GM12878 (cell line): ENCODE measurements at regions of chr14 and their contacts with region 1.

Region 1: GRCh38 chr14:75709207-75709812 is 48.3 kb downstream of the TTLL5 start:
- DNase-seq: peak; percentile 24
- ATAC-seq: peak; percentile 84
- H3K4me3 ChIP-seq: no peak overlapping the region
- H3K27ac ChIP-seq: no peak overlapping the region
- H3K4me1 ChIP-seq: peaks cover 6% of the 10 kb centered on the region
- H3K27me3 ChIP-seq: no peaks in the 10 kb centered on the region
- CTCF ChIP-seq: peak; percentile 75 to 81 (median 81)
- EP300 ChIP-seq: no peak
- POLR2A ChIP-seq: no peak
- RAD21 ChIP-seq: peak; percentile 82

Region 2: GRCh38 chr14:75604856-75605851 is 104.2 kb before region 1 on chr14:
- CTCF ChIA-PET with region 1: no interaction called
- POLR2A ChIA-PET with region 1: no interaction called
- RAD21 ChIA-PET with region 1: no interaction called
- SMC1A ChIA-PET with region 1: no interaction called
- in situ Hi-C with region 1: no loop called
- intact Hi-C with region 1: no loop called
- DNase-seq: no peak
- ATAC-seq: no peak
- H3K4me3 ChIP-seq: no peak overlapping the region
- H3K27ac ChIP-seq: no peak overlapping the region
- H3K4me1 ChIP-seq: no peaks in the 10 kb centered on the region
- H3K27me3 ChIP-seq: no peaks in the 10 kb centered on the region
- CTCF ChIP-seq: no peak
- EP300 ChIP-seq: no peak
- POLR2A ChIP-seq: no peak
- RAD21 ChIP-seq: no peak

Region 3: DNA sequence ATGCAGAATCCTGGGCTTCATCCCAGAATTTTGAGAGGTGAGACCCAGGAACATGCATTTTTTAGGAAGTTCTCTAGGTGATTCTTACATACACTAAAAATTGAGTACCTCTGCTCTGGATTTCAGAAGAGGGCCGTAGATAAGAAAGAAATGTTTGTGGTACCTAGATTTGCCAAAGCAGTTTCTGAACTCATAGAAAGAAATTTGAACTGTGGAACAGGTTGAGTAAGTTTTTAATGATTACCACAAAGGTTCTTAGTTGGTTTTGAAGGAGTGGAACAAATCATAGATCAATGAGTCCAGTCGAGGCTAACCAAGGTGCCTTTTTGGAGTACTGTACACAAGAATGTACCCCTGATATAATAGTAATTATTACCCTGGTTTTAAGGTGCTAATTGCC is 23.4 kb before region 1 on chr14:
- CTCF ChIA-PET with region 1: interaction called, 14 read pairs
- POLR2A ChIA-PET with region 1: no interaction called
- RAD21 ChIA-PET with region 1: interaction called, 3 read pairs
- SMC1A ChIA-PET with region 1: no interaction called
- in situ Hi-C with region 1: no loop called
- intact Hi-C with region 1: no loop called
- DNase-seq: no peak
- ATAC-seq: no peak
- H3K4me3 ChIP-seq: no peak overlapping the region
- H3K27ac ChIP-seq: no peak overlapping the region
- H3K4me1 ChIP-seq: no peaks in the 10 kb centered on the region
- H3K27me3 ChIP-seq: no peaks in the 10 kb centered on the region
- CTCF ChIP-seq: no peak
- EP300 ChIP-seq: no peak
- POLR2A ChIP-seq: no peak
- RAD21 ChIP-seq: no peak

Region 4: GRCh38 chr14:75748336-75748735 is 39.0 kb after region 1 on chr14:
- CTCF ChIA-PET with region 1: interaction called, 23 read pairs
- POLR2A ChIA-PET with region 1: no interaction called
- RAD21 ChIA-PET with region 1: no interaction called
- SMC1A ChIA-PET with region 1: interaction called, 4 read pairs
- in situ Hi-C with region 1: no loop called
- intact Hi-C with region 1: no loop called
- DNase-seq: no peak
- ATAC-seq: no peak
- H3K4me3 ChIP-seq: no peak overlapping the region
- H3K27ac ChIP-seq: no peak overlapping the region
- H3K4me1 ChIP-seq: no peaks in the 10 kb centered on the region
- H3K27me3 ChIP-seq: no peaks in the 10 kb centered on the region
- CTCF ChIP-seq: no peak
- EP300 ChIP-seq: no peak
- POLR2A ChIP-seq: no peak
- RAD21 ChIP-seq: no peak

Region 5: DNA sequence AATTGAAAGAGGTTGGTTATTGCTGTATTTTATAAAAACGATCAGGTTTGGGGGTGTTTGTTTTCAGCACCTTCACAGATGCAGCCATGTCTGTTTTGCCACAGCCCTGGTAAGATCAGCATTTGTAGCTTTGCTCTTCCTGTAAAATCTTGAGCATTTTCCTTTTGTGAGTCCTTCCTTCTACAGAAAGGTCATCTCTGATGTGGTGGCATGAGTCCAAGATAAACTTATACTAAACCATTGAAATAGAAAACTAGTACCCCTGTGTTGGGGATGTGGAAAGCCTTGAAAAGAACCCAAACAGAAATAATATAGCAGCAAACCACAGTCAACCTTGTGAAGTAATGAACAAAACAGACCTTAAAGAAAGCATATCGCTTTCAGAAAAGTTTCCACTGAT is 187.0 kb after region 1 on chr14:
- CTCF ChIA-PET with region 1: interaction called, 24 read pairs
- POLR2A ChIA-PET with region 1: no interaction called
- RAD21 ChIA-PET with region 1: no interaction called
- SMC1A ChIA-PET with region 1: interaction called, 3 read pairs
- in situ Hi-C with region 1: no loop called
- intact Hi-C with region 1: loop called (anchors 10 kb)
- DNase-seq: no peak
- ATAC-seq: no peak
- H3K4me3 ChIP-seq: no peak overlapping the region
- H3K27ac ChIP-seq: no peak overlapping the region
- H3K4me1 ChIP-seq: no peaks in the 10 kb centered on the region
- H3K27me3 ChIP-seq: no peaks in the 10 kb centered on the region
- CTCF ChIP-seq: no peak
- EP300 ChIP-seq: no peak
- POLR2A ChIP-seq: no peak
- RAD21 ChIP-seq: no peak

Region 6: GRCh38 chr14:75976826-75977581 is 267.7 kb after region 1 on chr14:
- CTCF ChIA-PET with region 1: interaction called, 276 read pairs
- POLR2A ChIA-PET with region 1: interaction called, 3 read pairs
- RAD21 ChIA-PET with region 1: interaction called, 179 read pairs
- SMC1A ChIA-PET with region 1: interaction called, 131 read pairs
- in situ Hi-C with region 1: loop called (anchors 5 kb)
- intact Hi-C with region 1: loop called (anchors 1 kb)
- DNase-seq: no peak
- ATAC-seq: no peak
- H3K4me3 ChIP-seq: no peak overlapping the region
- H3K27ac ChIP-seq: no peak overlapping the region
- H3K4me1 ChIP-seq: peaks cover 20% of the 10 kb centered on the region
- H3K27me3 ChIP-seq: no peaks in the 10 kb centered on the region
- CTCF ChIP-seq: peak in 1 of 3 experiments; percentile 19; a peak in 1 of 6 replicates
- EP300 ChIP-seq: no peak
- POLR2A ChIP-seq: no peak
- RAD21 ChIP-seq: peak; percentile 36; the same call in 1 of the 2 replicates

Region 7: GRCh38 chr14:75995372-75996041 is 286.2 kb after region 1 on chr14:
- CTCF ChIA-PET with region 1: interaction called, 14 read pairs
- POLR2A ChIA-PET with region 1: no interaction called
- RAD21 ChIA-PET with region 1: interaction called, 6 read pairs
- SMC1A ChIA-PET with region 1: no interaction called
- in situ Hi-C with region 1: no loop called
- intact Hi-C with region 1: no loop called
- DNase-seq: no peak
- ATAC-seq: no peak
- H3K4me3 ChIP-seq: no peak overlapping the region
- H3K27ac ChIP-seq: no peak overlapping the region
- H3K4me1 ChIP-seq: peaks cover 11% of the 10 kb centered on the region
- H3K27me3 ChIP-seq: no peaks in the 10 kb centered on the region
- CTCF ChIP-seq: no peak
- EP300 ChIP-seq: no peak
- POLR2A ChIP-seq: no peak
- RAD21 ChIP-seq: no peak

Region 8: GRCh38 chr14:76386915-76387782 is 677.8 kb after region 1 on chr14:
- CTCF ChIA-PET with region 1: interaction called, 16 read pairs
- POLR2A ChIA-PET with region 1: no interaction called
- RAD21 ChIA-PET with region 1: interaction called, 5 read pairs
- SMC1A ChIA-PET with region 1: interaction called, 9 read pairs
- in situ Hi-C with region 1: loop called (anchors 10 kb)
- intact Hi-C with region 1: no loop called
- DNase-seq: peak; percentile 7
- ATAC-seq: peak; percentile 99
- H3K4me3 ChIP-seq: no peak overlapping the region
- H3K27ac ChIP-seq: no peak overlapping the region
- H3K4me1 ChIP-seq: no peaks in the 10 kb centered on the region
- H3K27me3 ChIP-seq: no peaks in the 10 kb centered on the region
- CTCF ChIP-seq: peak; percentile 99
- EP300 ChIP-seq: no peak
- POLR2A ChIP-seq: no peak
- RAD21 ChIP-seq: peak; percentile 98